Activated CD8-positive, alpha-beta T cell treated with anti-CD3 and anti-CD28 coated beads for 36 hours (primary cell): ENCODE measurements at regions of chr2 and their contacts with region 1.

Region 1: DNA sequence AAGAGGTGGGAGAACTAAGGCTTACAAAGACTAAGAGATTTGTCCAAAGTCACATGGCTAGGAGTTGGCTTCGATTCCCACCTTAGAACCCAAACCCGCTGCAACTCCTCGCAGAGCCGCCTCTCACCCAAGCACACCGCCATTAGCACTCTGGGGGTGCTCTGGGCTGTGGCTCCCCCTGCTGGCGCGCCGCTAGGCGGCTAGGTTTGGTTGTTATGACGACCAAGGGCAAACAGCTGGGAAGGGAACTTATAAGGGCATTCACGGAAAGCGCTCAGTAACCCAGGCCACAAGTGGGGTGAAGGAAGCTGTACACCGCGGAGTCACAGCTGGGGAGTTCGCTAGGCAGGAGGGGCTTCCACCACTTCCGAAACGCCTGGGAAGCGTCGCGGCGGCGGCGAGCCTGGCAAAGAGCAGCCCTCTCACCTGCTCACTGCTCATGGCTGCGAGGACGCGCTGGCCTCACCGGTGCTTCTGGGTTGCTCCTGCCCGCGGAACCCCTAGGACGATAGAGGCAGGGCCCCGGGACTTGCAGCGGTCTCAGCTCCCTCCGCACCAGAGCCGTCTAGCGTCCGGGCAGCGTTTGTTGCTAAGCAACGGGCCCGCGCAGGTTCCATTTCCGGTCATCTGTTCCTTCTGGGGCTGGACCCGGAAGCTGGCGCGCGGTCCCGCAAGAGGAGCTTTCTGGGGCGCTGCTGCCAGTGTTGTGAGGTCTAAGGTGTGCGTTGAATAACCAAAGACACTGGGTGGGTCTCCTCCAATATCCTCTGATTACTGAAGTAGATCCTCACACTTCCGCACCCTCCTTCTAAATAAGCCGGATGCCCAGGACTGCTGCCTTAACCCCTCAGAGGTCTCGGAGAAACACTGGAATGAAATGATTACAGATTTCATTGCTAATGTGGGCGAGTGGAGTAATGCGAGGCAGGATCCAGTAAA is at the start of gene DNAH7:
- DNase-seq: peak; percentile 94
- ATAC-seq: peak; percentile 96
- H3K4me3 Mint-ChIP-seq: peak within 1 kb of the TSS; percentile 78
- H3K27ac Mint-ChIP-seq: peak within 1 kb of the TSS; percentile 62
- H3K4me1 Mint-ChIP-seq: peaks cover 15% of the 10 kb centered on the region
- H3K27me3 Mint-ChIP-seq: peaks cover 3% of the 10 kb centered on the region
- CTCF ChIP-seq: peak; percentile 62
- total RNA-seq, gene DNAH7: 0.07 TPM

Region 2: GRCh38 chr2:195575879-195576401 is 492.6 kb before region 1 on chr2:
- CTCF ChIA-PET with region 1: interaction called, 4 read pairs
- POLR2A ChIA-PET with region 1: no interaction called
- intact Hi-C with region 1: loop called (anchors 10 kb)
- DNase-seq: peak; percentile 48
- ATAC-seq: peak; percentile 72
- H3K4me3 Mint-ChIP-seq: no peak overlapping the region
- H3K27ac Mint-ChIP-seq: peak overlapping the region; percentile 47
- H3K4me1 Mint-ChIP-seq: peaks cover 53% of the 10 kb centered on the region
- H3K27me3 Mint-ChIP-seq: no peaks in the 10 kb centered on the region
- CTCF ChIP-seq: peak; percentile 36

Region 3: GRCh38 chr2:195664528-195664927 is 404.0 kb before region 1 on chr2:
- CTCF ChIA-PET with region 1: interaction called, 39 read pairs
- POLR2A ChIA-PET with region 1: interaction called, 4 read pairs
- intact Hi-C with region 1: loop called (anchors 5 kb)
- DNase-seq: no peak
- ATAC-seq: no peak
- H3K4me3 Mint-ChIP-seq: no peak overlapping the region
- H3K27ac Mint-ChIP-seq: no peak overlapping the region
- H3K4me1 Mint-ChIP-seq: peaks cover 56% of the 10 kb centered on the region
- H3K27me3 Mint-ChIP-seq: no peaks in the 10 kb centered on the region
- CTCF ChIP-seq: peak; percentile 22

Region 4: GRCh38 chr2:195993623-195994022 is 74.9 kb before region 1 on chr2:
- CTCF ChIA-PET with region 1: no interaction called
- POLR2A ChIA-PET with region 1: no interaction called
- intact Hi-C with region 1: no loop called
- DNase-seq: no peak
- ATAC-seq: no peak
- H3K4me3 Mint-ChIP-seq: no peak overlapping the region
- H3K27ac Mint-ChIP-seq: no peak overlapping the region
- H3K4me1 Mint-ChIP-seq: peaks cover 9% of the 10 kb centered on the region
- H3K27me3 Mint-ChIP-seq: peaks cover 3% of the 10 kb centered on the region
- CTCF ChIP-seq: no peak

Region 5: DNA sequence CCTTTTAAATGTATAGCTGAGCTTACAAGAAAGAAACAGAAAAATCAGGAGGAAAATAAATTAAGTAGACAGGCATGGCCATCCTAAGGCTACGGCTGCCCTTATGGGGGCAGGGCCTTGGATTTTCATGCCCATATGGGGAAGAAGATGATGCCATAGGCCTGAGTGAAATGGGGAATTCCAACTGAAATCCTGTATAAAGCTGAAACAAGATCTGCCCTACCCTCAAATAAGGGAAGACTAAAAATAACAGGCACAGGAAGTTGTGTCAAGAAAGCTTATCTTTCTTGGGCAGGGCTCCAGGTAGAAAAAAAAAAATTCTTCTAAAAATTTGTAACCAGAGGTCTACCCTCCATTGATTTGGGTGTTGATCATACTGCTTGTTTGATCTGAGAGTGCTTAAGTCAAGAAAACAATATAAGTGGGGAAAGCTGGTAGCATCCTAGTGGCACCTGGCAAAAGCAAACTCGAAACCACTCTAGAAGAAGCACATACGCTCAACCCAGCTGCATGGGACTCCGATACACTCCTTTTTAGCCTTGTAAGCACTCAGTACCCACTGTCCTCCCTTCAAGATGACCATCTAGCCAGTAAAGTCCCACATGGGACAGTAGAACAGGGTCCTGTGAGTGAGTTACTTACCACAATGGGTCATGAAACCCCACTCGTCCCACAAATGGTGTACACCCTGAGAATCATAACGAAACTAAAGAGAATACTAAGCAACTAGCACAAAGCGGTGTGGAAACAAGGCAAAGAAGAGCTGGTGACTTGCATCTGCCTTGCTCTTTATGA is 22.2 kb before region 1 on chr2:
- CTCF ChIA-PET with region 1: interaction called, 21 read pairs
- POLR2A ChIA-PET with region 1: interaction called, 3 read pairs
- intact Hi-C with region 1: no loop called
- DNase-seq: no peak
- ATAC-seq: no peak
- H3K4me3 Mint-ChIP-seq: no peak overlapping the region
- H3K27ac Mint-ChIP-seq: no peak overlapping the region
- H3K4me1 Mint-ChIP-seq: no peaks in the 10 kb centered on the region
- H3K27me3 Mint-ChIP-seq: peaks cover 4% of the 10 kb centered on the region
- CTCF ChIP-seq: no peak

Region 6: DNA sequence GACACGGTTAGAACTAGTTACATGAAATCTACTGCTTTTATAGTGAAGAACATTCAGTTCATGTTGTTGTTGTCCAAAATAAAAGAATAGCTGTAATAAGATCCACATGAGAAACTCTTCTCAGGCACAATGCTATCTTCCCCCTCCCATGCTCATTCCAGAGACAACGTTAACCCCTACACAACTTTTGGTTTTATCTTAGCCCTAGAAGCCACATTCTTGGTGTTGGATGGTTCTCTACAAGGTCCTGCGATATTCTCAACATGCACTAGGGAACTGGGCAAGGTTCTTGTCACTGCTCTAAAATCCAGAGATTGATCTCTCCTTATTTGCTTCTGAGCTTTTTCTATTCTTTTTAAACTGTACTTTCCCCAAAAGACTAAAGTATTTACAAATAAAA is 51.4 kb after region 1 on chr2:
- CTCF ChIA-PET with region 1: interaction called, 11 read pairs
- POLR2A ChIA-PET with region 1: no interaction called
- intact Hi-C with region 1: no loop called
- DNase-seq: no peak
- ATAC-seq: no peak
- H3K4me3 Mint-ChIP-seq: no peak overlapping the region
- H3K27ac Mint-ChIP-seq: no peak overlapping the region
- H3K4me1 Mint-ChIP-seq: no peaks in the 10 kb centered on the region
- H3K27me3 Mint-ChIP-seq: no peaks in the 10 kb centered on the region
- CTCF ChIP-seq: no peak

Region 7: DNA sequence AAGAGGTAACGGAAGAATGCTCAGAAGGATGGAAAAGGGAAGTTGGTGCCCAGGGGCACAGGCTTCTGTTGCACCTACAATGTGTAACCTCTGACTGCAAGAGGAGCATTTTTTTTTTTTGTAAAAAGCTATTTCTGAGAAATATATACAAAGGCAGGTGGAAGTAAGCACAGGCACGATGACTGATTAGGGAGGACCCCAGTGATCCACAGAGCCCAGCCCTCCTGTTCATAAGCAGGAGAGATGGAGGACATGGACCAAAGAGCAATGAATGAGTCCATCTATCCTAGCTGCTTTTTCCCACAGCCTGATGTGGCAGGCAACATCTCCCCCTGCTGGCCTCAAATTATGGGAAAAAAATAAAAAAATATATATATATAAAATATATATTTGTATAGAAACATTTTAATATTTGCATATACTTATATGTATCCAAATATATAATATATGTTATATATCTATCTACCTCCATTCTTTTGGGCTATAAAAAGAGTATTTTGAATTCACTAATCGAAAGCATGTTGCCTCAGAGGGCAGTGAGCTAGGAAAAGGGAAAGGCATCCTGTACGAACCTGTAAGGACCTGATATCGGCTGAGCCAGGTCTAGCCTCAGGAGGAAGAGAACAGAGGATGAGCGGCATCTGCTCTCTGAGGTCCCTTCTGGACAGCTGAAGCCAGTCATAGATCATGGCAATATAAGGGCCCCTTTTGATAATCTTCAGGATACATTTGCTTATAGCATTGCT is 268.8 kb after region 1 on chr2:
- CTCF ChIA-PET with region 1: interaction called, 34 read pairs
- POLR2A ChIA-PET with region 1: interaction called, 3 read pairs
- intact Hi-C with region 1: no loop called
- DNase-seq: peak; percentile 16
- ATAC-seq: peak; percentile 24
- H3K4me3 Mint-ChIP-seq: no peak overlapping the region
- H3K27ac Mint-ChIP-seq: no peak overlapping the region
- H3K4me1 Mint-ChIP-seq: peaks cover 8% of the 10 kb centered on the region
- H3K27me3 Mint-ChIP-seq: no peaks in the 10 kb centered on the region
- CTCF ChIP-seq: peak; percentile 75